Uterus (tissue), 4 donors: ENCODE measurements at regions of chr12 and their contacts with region 1.

Region 1: DNA sequence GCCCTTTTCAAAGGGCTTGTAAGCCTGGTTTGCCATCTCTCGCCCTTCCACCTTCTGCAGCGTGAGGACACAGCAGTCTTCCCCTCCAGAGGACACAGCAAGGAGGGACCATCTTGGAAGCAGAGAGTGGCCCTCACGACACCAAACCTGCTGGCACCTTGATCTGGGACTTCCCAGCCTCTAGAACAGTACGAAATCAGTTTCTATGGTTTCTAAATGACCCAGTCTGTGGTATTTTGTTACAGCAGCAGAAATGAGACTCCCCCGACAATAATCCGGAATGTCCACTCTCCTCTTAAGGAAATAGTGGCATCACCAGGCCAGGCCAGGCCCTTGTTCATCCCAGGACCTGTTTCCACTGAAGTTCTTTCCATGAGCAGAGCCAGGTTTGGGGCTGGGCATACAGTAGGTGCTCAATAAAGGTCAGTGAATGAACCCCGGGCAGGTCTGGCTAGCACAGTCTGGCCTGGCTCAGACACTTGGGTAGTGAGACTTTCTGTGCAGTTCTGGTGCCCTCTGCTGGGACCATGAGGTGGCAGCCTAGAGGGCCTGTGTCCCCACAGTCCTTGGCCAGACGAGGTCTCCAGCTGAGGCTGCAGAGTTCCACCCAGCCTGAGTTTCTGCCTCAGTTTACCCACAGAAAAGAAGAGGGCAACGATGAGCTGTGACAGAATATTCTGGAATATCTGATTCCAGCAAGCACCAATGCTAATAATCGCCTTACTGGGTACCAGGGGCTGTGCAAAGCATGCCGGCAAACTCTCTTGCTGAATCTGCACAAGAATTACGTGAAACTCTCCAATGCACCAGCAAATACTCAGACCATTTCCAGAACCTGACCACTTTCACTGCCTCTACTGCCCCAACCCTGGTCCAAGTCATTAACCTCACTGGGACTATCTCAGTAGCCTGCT is 14.0 kb downstream of the ABCB9 start:
- DNase-seq: peak; percentile 65 to 68
- H3K4me3 ChIP-seq: no peak overlapping the region
- H3K27ac ChIP-seq: no peak overlapping the region
- H3K4me1 ChIP-seq: no peaks in the 10 kb centered on the region
- H3K27me3 ChIP-seq: no peaks in the 10 kb centered on the region
- CTCF ChIP-seq: peak; percentile 68 to 90 (median 77)
- POLR2A ChIP-seq: no peak

Region 2: DNA sequence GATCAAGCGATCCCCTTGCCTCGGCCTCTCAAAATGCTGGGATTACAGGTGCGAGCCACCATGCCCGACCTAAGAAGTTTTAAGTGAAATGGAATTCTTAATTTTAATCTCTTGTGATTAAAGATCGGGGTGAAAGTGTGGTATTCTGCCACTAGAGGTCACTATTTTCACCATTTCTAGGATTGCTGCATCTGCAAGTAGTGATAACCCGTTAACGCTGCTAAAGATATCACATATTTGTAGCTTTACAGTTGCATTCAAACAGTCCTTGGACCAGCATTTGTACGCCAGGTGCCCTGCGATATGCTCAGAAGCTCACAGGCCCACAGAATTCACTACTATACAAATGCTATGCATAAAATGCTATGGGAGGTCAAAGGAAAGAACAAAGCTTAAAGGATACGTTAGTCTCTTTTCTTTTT is 158.5 kb before region 1 on chr12:
- intact Hi-C with region 1: loop called (anchors 5 kb)
- DNase-seq: no peak
- H3K4me3 ChIP-seq: no peak overlapping the region
- H3K27ac ChIP-seq: no peak overlapping the region
- H3K4me1 ChIP-seq: no peaks in the 10 kb centered on the region
- H3K27me3 ChIP-seq: no peaks in the 10 kb centered on the region
- CTCF ChIP-seq: peak; percentile 58 to 72 (median 62)
- POLR2A ChIP-seq: no peak

Region 3: GRCh38 chr12:122860346-122861090 is 91.7 kb before region 1 on chr12:
- intact Hi-C with region 1: loop called (anchors 2 kb)
- DNase-seq: peak; percentile 84 to 87
- H3K4me3 ChIP-seq: no peak overlapping the region
- H3K27ac ChIP-seq: peak overlapping the region in 1 of 2 donors; percentile 12
- H3K4me1 ChIP-seq: no peaks in the 10 kb centered on the region
- H3K27me3 ChIP-seq: no peaks in the 10 kb centered on the region
- CTCF ChIP-seq: peak; percentile 94 to 95 (median 94)
- POLR2A ChIP-seq: no peak

Region 4: GRCh38 chr12:123089631-123090353 is 137.6 kb after region 1 on chr12:
- intact Hi-C with region 1: no loop called
- DNase-seq: no peak
- H3K4me3 ChIP-seq: no peak overlapping the region
- H3K27ac ChIP-seq: no peak overlapping the region
- H3K4me1 ChIP-seq: peaks cover 0 to 11% of the 10 kb centered on the region in 2 donors
- H3K27me3 ChIP-seq: no peaks in the 10 kb centered on the region
- CTCF ChIP-seq: no peak
- POLR2A ChIP-seq: no peak